ENCODE measurements at regions of chr5 and their contacts with region 1.

Region 1: DNA sequence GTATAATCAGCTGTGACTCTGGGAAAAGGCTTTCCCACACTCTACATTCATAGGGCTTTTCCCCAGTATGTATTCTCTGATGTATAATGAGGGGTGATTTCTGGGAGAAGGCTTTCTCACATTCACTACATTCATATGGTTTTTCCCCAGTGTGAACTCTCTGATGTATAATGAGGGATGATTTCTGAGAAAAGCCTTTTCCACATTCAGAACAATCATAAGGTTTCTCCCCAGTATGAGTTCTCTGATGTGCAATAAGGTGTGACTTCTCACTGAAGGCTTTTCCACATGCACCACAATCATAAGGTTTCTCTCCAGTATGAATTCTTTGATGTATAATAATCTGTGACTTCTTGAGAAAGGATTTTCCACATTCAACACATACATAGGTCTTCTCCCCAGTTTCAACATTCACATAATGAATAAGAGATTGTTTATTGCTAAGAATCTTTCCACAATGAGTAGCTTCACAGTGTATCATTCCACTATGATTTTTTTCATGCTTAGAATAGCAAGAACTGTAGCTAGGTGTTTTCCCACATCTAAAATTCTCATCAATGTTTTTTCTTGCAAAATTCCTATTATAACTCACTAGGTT is 26.7 kb upstream of the ZNF300 start:
- DNase-seq: no peak
- ATAC-seq: no peak
- H3K4me3 ChIP-seq: no peak overlapping the region
- H3K27ac ChIP-seq: no peak overlapping the region
- H3K4me1 ChIP-seq: no peaks in the 10 kb centered on the region
- H3K27me3 ChIP-seq: no peaks in the 10 kb centered on the region
- CTCF ChIP-seq: no peak
- POLR2A ChIP-seq: no peak

Region 2: GRCh38 chr5:150511578-150512367 is 419.7 kb before region 1 on chr5:
- intact Hi-C with region 1: no loop called
- DNase-seq: peak in 2 of 5 donors; percentile 60 to 63
- ATAC-seq: peak; percentile 32 to 68 (median 46)
- H3K4me3 ChIP-seq: no peak overlapping the region
- H3K27ac ChIP-seq: peak overlapping the region in 9 of 12 donors; percentile 21 to 60 (median 49)
- H3K4me1 ChIP-seq: peaks cover 20 to 100% (median 89%) of the 10 kb centered on the region in 12 donors
- H3K27me3 ChIP-seq: no peaks in the 10 kb centered on the region
- CTCF ChIP-seq: no peak
- POLR2A ChIP-seq: no peak

Region 3: GRCh38 chr5:150904479-150905318 is 26.8 kb before region 1 on chr5 and contains the start of gene ZNF300:
- intact Hi-C with region 1: loop called in 1 of 10 experiments (anchors 2 kb)
- DNase-seq: peak; percentile 85 to 91 (median 89)
- ATAC-seq: peak; percentile 96 to 100 (median 100)
- H3K4me3 ChIP-seq: peak within 1 kb of the TSS; percentile 2 to 71 (median 53)
- H3K27ac ChIP-seq: peak within 1 kb of the TSS in 10 of 12 donors; percentile 40 to 91 (median 69)
- H3K4me1 ChIP-seq: peaks cover 0 to 5% (median 0%) of the 10 kb centered on the region in 12 donors
- H3K27me3 ChIP-seq: no peaks in the 10 kb centered on the region
- CTCF ChIP-seq: no peak
- POLR2A ChIP-seq: no peak
- total RNA-seq, gene ZNF300: 0.30 to 1.3 (median 0.69) TPM

Measured in heart left ventricle (tissue), 16 donors.